ENCODE measurements at regions of chr22 and their contacts with region 1.

Region 1: GRCh38 chr22:38163844-38164550 is 17.6 kb downstream of the PLA2G6 start:
- DNase-seq: no peak
- ATAC-seq: no peak
- H3K4me3 ChIP-seq: no peak overlapping the region
- H3K4me3 Mint-ChIP-seq: no peak overlapping the region
- H3K27ac ChIP-seq: no peak overlapping the region
- H3K27ac Mint-ChIP-seq: peak overlapping the region; percentile 68
- H3K4me1 ChIP-seq: peaks cover 22 to 23% of the 10 kb centered on the region in 2 donors
- H3K4me1 Mint-ChIP-seq: peaks cover 32% of the 10 kb centered on the region
- H3K27me3 ChIP-seq: no peaks in the 10 kb centered on the region
- H3K27me3 Mint-ChIP-seq: no peaks in the 10 kb centered on the region
- CTCF ChIP-seq: no peak

Region 2: GRCh38 chr22:37817705-37818408 is 346.1 kb before region 1 on chr22:
- CTCF ChIA-PET with region 1: no interaction called
- POLR2A ChIA-PET with region 1: no interaction called
- intact Hi-C with region 1: no loop called
- DNase-seq: peak; percentile 86
- ATAC-seq: peak; percentile 90
- H3K4me3 ChIP-seq: peak overlapping the region in 4 of 5 experiments; percentile 29 to 51 (median 40)
- H3K4me3 Mint-ChIP-seq: peak overlapping the region; percentile 82
- H3K27ac ChIP-seq: no peak overlapping the region
- H3K27ac Mint-ChIP-seq: no peak overlapping the region
- H3K4me1 ChIP-seq: peaks cover 19 to 20% of the 10 kb centered on the region in 2 donors
- H3K4me1 Mint-ChIP-seq: peaks cover 10% of the 10 kb centered on the region
- H3K27me3 ChIP-seq: peaks cover 0 to 44% (median 9%) of the 10 kb centered on the region in 4 experiments
- H3K27me3 Mint-ChIP-seq: peaks cover 19% of the 10 kb centered on the region
- CTCF ChIP-seq: peak; percentile 90

Region 3: GRCh38 chr22:38143036-38143697 is 20.8 kb before region 1 on chr22:
- CTCF ChIA-PET with region 1: no interaction called
- POLR2A ChIA-PET with region 1: no interaction called
- intact Hi-C with region 1: no loop called
- DNase-seq: no peak
- ATAC-seq: no peak
- H3K4me3 ChIP-seq: no peak overlapping the region
- H3K4me3 Mint-ChIP-seq: no peak overlapping the region
- H3K27ac ChIP-seq: no peak overlapping the region
- H3K27ac Mint-ChIP-seq: no peak overlapping the region
- H3K4me1 ChIP-seq: peaks cover 5 to 6% of the 10 kb centered on the region in 2 donors
- H3K4me1 Mint-ChIP-seq: peaks cover 8% of the 10 kb centered on the region
- H3K27me3 ChIP-seq: no peaks in the 10 kb centered on the region
- H3K27me3 Mint-ChIP-seq: no peaks in the 10 kb centered on the region
- CTCF ChIP-seq: no peak

Region 4: DNA sequence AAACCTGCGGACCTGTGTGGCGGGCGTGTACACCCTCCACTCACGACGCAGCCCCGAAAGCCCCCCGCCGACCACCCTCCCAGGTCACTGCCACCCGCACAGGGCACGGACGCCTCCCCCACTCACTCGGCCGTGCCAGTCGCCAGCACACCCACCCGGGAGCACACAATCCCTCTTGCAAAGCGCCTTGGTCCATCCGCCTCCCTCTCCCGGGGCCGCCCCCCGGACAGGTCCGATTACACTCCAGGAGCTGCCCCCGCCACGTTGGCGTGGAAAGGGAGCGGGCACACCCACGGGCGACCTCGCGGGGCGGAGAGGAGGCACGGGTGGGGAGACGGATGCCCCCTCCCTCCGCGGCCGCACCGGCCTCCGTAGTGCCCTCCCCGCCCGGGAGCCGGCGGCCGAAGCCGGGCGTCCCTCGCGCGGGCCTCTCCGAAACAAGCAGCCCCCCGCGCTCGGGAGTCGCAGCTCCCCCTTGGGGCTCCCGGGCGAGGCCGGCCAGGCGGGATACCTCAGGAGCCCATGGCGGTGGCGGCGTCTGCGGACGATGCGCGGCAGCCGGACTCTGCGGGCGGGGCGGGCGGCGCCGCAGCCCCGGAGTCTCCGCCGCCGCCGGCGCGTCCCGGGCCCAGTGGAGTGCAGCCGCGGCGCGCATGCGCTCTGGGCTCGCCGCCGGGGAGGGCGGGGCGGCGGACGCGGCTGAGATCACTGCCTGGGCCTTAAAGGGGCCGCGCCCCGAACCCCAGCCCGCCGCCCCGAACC is 108.6 kb after region 1 on chr22 and contains the start of gene TMEM184B:
- CTCF ChIA-PET with region 1: no interaction called
- POLR2A ChIA-PET with region 1: no interaction called
- intact Hi-C with region 1: loop called (anchors 5 kb)
- DNase-seq: peak; percentile 90
- ATAC-seq: peak; percentile 96
- H3K4me3 ChIP-seq: peak within 1 kb of the TSS; percentile 48 to 98 (median 76)
- H3K4me3 Mint-ChIP-seq: peak within 1 kb of the TSS; percentile 94
- H3K27ac ChIP-seq: peak within 1 kb of the TSS; percentile 66 to 85
- H3K27ac Mint-ChIP-seq: peak within 1 kb of the TSS; percentile 92
- H3K4me1 ChIP-seq: peaks cover 15 to 21% of the 10 kb centered on the region in 2 donors
- H3K4me1 Mint-ChIP-seq: peaks cover 38% of the 10 kb centered on the region
- H3K27me3 ChIP-seq: peaks cover 0 to 3% (median 0%) of the 10 kb centered on the region in 4 experiments
- H3K27me3 Mint-ChIP-seq: no peaks in the 10 kb centered on the region
- CTCF ChIP-seq: no peak
- total RNA-seq, gene TMEM184B: 23.5 and 24.7 TPM in 2 replicates

Measured in B cell (primary cell).